Heart right ventricle (tissue), 16 donors: ENCODE measurements at regions of chr1 and their contacts with region 1.

Region 1: DNA sequence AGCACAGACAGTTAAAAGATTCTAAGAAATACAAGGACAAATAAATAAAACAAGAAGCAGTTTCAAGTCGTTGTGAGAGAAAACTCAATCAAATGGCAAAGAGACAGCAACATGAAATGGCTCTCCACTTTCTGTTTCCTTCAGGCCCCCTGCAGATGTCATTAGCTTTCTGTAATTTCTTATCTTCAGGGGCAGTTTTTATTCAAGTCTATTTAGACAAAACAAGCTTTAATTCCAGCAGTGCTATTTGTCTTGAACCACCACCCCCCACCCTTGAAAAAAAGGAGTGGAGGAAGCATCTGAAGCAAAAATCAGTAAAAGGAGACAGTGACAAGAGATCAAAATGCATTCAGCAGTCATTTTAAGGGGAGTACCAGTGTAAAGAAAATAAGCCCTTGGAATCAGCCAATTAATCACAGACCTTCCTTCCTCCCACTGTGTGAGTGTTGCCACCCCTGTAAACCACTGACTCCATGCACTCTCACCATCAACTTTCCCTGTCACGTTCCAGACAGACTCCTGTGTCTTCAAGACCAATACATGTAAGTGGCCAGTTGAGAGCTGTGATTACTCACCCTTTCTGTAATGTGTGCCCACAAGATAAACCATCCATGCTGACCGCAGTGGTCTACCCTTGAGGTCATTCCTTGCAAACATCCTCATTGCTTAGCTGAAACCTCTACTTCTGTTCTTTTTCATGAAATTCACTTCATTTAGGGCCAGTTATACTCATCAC is 136.1 kb upstream of the HOOK1 start:
- DNase-seq: no peak
- ATAC-seq: peak in 2 of 8 donors; percentile 35 to 43
- H3K4me3 ChIP-seq: no peak overlapping the region
- H3K27ac ChIP-seq: peak overlapping the region in 7 of 10 donors; percentile 17 to 54 (median 42)
- H3K4me1 ChIP-seq: peaks cover 0 to 59% (median 12%) of the 10 kb centered on the region in 9 donors
- H3K27me3 ChIP-seq: no peaks in the 10 kb centered on the region
- CTCF ChIP-seq: no peak

Region 2: DNA sequence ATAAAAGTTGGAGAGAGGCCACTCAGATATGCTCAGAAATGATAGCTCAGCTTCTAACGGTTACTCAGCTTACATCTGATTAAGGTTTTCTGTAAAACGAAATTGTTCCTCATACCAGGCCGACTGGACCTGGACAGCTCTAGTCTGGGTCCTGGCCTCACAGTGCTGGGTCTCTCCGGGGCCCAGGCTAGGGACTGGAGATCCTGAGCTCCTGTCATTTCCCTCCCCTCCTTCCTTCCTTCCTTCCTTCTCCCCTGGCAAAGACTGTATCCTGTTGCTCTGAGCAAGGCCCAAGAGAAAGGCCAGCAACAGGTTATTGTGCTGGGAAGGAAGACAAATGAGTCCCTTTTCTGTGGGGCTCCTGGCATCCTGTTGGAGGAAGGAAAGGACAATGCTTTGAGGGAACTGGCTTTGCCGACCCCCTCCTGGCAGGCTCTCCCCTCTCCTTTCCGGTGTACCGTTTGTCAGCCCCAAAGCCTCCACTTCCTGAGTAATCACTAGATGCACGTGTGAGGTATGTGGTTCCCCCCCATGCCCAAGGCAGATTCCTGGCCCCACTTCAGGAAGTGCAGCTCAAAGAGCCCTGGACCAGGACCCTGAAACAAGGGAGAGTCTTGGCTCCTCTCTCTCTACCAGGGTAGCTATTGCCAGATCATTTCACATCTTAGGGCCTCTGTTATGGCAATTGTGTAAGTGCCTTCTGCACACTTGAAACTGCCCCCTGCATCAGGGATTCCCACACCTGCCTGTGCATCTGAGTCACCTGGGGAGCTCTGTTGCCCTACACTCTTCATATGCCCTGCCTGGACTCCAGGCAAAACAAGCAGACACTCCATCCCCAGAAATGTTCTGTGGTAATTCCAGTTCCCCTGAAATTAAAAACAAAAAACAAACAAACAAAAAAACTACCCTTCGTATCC is 594.5 kb before region 1 on chr1:
- intact Hi-C with region 1: loop called in 1 of 10 experiments (anchors 10 kb)
- DNase-seq: peak; percentile 29 to 37
- ATAC-seq: peak; percentile 74 to 84 (median 80)
- H3K4me3 ChIP-seq: no peak overlapping the region
- H3K27ac ChIP-seq: peak overlapping the region in 8 of 10 donors; percentile 9 to 81 (median 60)
- H3K4me1 ChIP-seq: peaks cover 4 to 32% (median 19%) of the 10 kb centered on the region in 9 donors
- H3K27me3 ChIP-seq: no peaks in the 10 kb centered on the region
- CTCF ChIP-seq: no peak

Region 3: DNA sequence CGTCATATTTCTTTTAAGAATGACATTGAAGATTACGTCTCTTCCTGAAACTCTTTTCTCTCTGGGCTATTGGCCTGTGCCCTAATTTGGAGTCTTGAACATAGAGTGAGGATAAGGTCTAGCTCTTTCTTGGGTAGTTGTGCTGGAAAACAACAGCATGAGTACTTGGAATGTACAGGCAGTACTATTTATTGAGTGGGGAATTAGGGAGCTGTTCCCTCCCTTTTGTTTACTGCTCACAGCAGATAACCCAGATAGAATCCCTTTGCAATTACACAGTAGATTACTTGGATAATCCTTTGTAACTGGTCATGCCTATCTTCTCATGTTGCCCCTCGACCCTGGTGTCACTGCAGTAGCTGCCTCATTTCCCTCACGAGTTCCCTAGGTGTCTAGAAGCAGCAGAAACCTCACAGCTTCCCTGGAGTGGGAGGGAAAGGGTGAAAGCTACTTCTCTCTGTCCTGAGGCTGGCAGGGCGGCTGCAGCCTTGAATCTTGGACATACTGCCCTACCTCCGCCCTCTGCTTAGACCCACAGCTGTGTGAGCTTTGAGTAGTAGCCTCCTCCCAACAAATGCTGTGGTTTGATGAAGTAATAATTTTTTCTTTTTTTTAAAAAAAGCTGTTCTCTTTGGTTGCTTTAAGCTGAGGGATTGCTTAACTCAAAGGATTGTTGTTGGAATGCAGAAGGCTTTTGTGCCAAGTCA is 311.2 kb before region 1 on chr1:
- intact Hi-C with region 1: loop called in 1 of 10 experiments (anchors 10 kb)
- DNase-seq: peak; percentile 29 to 48
- ATAC-seq: peak; percentile 70 to 98 (median 94)
- H3K4me3 ChIP-seq: no peak overlapping the region
- H3K27ac ChIP-seq: peak overlapping the region in 9 of 10 donors; percentile 35 to 78 (median 53)
- H3K4me1 ChIP-seq: peaks cover 0 to 21% (median 9%) of the 10 kb centered on the region in 9 donors
- H3K27me3 ChIP-seq: no peaks in the 10 kb centered on the region
- CTCF ChIP-seq: no peak

Region 4: DNA sequence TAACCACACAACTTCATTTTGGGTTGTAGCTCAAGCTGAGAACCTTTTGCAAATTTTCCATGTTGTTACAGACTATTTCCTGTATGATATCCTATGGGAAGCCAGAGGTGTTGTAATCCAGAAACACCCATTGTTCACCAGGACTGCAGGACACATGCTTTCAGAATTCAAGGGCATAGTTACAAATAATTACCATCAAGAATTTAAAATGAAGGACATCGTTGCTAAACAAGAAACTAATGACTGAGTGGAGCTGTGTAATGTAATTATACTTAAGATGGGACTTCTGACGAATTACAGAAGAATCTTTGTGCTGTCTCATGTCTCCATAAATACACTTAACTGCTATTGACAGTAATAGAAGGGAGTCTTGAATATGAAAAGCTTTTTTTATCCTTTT is 88.5 kb after region 1 on chr1:
- intact Hi-C with region 1: no loop called
- DNase-seq: no peak
- ATAC-seq: peak in 2 of 8 donors; percentile 34 to 50
- H3K4me3 ChIP-seq: no peak overlapping the region
- H3K27ac ChIP-seq: no peak overlapping the region
- H3K4me1 ChIP-seq: peaks cover 0 to 9% (median 0%) of the 10 kb centered on the region in 9 donors
- H3K27me3 ChIP-seq: no peaks in the 10 kb centered on the region
- CTCF ChIP-seq: no peak